BJ (cell line): ENCODE measurements at regions of chr5 and their contacts with region 1.

Region 1: GRCh38 chr5:151751091-151751490 is 7.3 kb downstream of the ATOX1 start:
- DNase-seq: no peak
- H3K4me3 ChIP-seq: no peak overlapping the region
- H3K27me3 ChIP-seq: no peaks in the 10 kb centered on the region
- CTCF ChIP-seq: no peak

Region 2: DNA sequence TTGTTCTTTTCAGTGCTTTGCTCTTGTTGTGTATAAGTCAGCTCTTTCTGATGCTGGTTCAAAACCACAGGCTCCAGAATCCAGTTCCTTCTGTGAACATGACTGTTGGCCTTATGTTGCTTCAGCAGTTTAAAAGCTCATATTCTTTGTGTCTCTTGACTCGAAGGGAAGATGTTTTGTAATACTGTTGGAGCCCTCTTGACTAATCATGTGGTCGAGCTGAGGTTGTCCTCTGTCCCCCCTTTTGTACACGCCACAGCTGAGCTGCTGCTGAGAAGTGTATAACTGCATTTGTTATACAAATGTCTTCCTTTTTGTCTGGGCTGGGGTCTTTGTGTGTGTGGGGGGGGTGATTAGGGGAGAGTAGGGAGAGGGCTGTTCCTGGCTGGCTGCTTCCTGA is 267.9 kb before region 1 on chr5:
- CTCF ChIA-PET with region 1: no interaction called
- POLR2A ChIA-PET with region 1: interaction called, 20 read pairs
- DNase-seq: no peak
- H3K4me3 ChIP-seq: no peak overlapping the region
- H3K27me3 ChIP-seq: no peaks in the 10 kb centered on the region
- CTCF ChIP-seq: no peak